Ascending aorta (tissue), 2 donors: ENCODE measurements at regions of chr2 and their contacts with region 1.

Region 1: DNA sequence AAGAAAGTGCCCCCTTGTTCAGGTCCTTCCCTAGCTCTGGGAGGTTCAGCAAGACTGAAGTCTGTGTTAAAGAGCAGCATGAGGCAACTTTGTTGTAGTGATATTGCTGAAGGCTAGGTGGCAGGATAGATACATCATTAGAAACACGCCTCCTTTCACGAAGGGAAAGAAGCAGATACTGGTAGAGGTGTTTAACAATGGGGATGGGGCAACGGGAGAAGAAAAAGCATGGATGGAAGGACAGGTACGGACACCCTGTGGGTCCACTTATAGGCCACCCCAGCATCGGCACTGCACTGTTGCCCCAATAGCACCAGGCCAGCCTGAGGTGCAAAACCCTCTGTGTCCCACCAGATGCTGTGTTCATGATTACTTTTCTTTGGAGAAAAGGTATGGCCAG is 3.5 kb upstream of the IGFBP5 start:
- DNase-seq: no peak
- H3K4me3 ChIP-seq: no peak overlapping the region
- H3K27ac ChIP-seq: peak overlapping the region; percentile 65 to 93
- H3K4me1 ChIP-seq: peaks cover 3 to 37% of the 10 kb centered on the region in 2 donors
- H3K27me3 ChIP-seq: no peaks in the 10 kb centered on the region
- CTCF ChIP-seq: peak; percentile 60 to 75 (median 70)

Region 2: DNA sequence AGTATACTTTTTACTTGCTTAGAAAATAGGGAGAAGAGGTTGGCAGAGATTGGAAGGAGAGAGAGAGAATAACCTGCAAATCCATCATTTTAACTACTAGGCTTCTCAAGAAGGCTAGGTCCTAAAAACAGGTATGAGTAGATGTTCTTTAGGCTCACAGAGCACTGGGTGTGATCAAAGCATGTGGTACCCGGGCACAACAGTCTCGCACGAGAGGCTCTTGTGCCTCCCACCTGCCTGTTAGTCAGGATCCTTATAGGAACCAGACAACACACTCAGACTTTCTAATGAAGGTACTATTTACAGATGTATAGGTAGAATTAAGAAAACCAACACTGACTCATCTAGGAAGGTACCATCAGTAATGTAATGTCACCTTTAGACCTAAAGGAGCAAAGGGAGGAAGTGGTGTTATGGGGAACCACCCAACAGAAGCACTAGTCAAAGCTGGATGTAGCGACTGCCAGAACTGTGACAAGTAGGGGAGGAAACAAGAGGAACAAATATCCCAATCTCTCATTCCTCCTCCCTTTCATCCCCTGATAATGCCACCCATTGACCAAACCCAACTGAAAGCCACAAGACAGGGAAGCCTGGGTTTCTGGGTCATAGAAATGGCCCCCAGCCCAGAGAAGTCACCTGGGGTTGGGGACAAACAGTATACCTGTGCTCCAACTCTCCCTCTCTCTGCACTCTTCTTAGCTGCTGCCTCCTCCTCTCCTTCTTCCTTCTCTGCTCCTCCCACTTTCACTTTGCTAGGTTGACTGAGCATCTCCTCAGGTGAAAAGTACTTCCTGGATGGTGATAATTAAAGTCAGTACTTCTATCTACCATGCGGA is 310.6 kb before region 1 on chr2:
- intact Hi-C with region 1: no loop called
- DNase-seq: no peak
- H3K4me3 ChIP-seq: no peak overlapping the region
- H3K27ac ChIP-seq: no peak overlapping the region
- H3K4me1 ChIP-seq: no peaks in the 10 kb centered on the region
- H3K27me3 ChIP-seq: no peaks in the 10 kb centered on the region
- CTCF ChIP-seq: no peak

Region 3: DNA sequence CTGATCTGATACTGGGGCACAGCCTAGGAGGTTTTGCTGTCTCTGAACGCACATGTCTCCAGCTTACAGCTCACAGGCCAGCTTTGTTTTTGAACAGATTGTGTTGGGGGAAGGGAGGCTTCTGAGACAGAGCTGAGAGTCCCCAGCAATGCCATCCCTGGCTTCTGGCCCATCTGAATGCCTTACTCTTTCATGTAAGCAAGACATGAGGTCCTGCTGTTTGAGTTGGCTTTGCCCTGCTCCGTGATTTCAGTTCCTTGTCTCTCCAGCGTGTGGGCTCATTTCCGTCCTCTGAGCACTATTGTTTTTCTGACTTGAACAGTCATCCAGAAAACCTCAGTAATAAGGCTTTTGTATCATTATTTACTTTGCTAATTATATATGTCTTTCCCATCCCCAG is 355.9 kb after region 1 on chr2:
- intact Hi-C with region 1: loop called (anchors 5 kb)
- DNase-seq: peak in 1 of 2 donors; percentile 70
- H3K4me3 ChIP-seq: no peak overlapping the region
- H3K27ac ChIP-seq: peak overlapping the region; percentile 78 to 89
- H3K4me1 ChIP-seq: peaks cover 13 to 45% of the 10 kb centered on the region in 2 donors
- H3K27me3 ChIP-seq: no peaks in the 10 kb centered on the region
- CTCF ChIP-seq: no peak

Region 4: GRCh38 chr2:217223222-217223930 is 524.5 kb after region 1 on chr2:
- intact Hi-C with region 1: loop called (anchors 5 kb)
- DNase-seq: peak; percentile 35 to 88
- H3K4me3 ChIP-seq: no peak overlapping the region
- H3K27ac ChIP-seq: peak overlapping the region; percentile 66 to 70
- H3K4me1 ChIP-seq: peaks cover 3 to 32% of the 10 kb centered on the region in 2 donors
- H3K27me3 ChIP-seq: no peaks in the 10 kb centered on the region
- CTCF ChIP-seq: no peak

Region 5: GRCh38 chr2:217360781-217361482 is 662.0 kb after region 1 on chr2:
- intact Hi-C with region 1: loop called (anchors 5 kb)
- DNase-seq: peak in 1 of 2 donors; percentile 83
- H3K4me3 ChIP-seq: peak overlapping the region in 1 of 2 donors; percentile 10
- H3K27ac ChIP-seq: peak overlapping the region; percentile 83 to 86
- H3K4me1 ChIP-seq: peaks cover 18 to 58% of the 10 kb centered on the region in 2 donors
- H3K27me3 ChIP-seq: no peaks in the 10 kb centered on the region
- CTCF ChIP-seq: no peak

Region 6: DNA sequence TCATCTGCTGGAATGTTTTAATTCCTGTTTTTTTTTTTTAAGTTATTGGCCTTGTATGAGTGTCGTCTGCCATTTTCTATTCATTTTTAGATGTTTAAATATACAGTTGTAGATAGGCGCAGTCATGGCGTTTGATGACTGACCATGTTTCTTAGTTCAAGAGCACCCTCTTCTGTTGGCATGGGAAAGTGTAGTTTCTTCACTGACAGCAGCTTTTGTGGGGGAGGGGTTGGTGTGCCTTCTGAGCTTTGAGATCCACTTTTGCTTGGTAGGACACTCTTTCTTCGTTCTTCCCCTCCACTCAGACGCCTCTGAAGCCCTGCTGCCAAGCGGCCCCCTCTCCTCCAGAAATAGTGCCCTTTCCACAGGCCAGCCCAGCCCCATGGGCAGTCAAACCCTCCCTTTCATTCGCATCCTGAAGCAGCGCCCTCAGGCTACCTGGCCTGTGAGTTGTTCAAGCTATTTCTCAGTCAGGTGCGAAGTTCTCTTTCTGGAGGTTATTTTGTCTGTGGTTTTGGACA is 811.9 kb after region 1 on chr2:
- intact Hi-C with region 1: loop called (anchors 2 kb)
- DNase-seq: peak in 1 of 2 donors; percentile 75
- H3K4me3 ChIP-seq: no peak overlapping the region
- H3K27ac ChIP-seq: no peak overlapping the region
- H3K4me1 ChIP-seq: peaks cover 0 to 6% of the 10 kb centered on the region in 2 donors
- H3K27me3 ChIP-seq: no peaks in the 10 kb centered on the region
- CTCF ChIP-seq: peak; percentile 76 to 86 (median 79)